ENCODE measurements at regions of chr10 and their contacts with region 1.

Region 1: DNA sequence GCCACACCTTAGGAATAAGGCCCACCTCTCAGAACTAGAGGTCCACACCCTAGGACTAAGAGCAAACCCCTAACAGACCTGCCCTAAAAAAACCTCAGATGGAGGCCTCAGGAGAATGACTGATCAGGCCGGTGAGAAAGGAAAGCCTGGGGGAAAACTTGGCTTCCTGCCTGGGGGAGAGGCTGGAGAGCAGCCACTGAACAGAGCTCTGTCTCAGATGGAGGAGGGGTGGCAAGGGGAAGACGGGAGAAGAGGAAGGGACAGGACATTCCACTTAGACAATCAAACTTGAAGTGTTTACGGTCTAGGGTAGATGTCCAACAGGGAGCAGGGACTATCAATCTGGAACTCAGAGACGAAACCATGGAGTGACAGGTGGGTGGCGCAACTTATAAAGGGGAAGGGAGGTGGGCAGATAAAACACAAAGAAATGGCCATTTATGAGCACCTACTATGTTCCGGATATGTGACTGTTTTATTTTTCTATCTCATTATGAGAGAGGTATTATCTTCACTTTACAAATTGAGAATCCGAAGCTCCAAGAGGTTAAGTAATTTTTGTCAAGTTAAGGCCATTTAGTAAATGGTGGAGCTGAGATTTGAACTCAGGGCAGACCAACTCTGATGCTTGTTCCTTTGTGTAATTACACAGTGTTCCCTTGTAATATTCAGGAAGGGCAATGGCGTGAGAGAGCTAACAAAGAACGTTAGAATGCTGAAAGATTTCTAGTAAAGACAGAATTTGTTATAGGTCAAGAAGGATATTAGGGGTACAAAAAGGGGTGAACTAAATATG is 82.6 kb downstream of the DNMBP start:
- DNase-seq: peak in 1 of 2 experiments; percentile 34
- ATAC-seq: peak in 1 of 2 experiments; percentile 23; a peak in 3 of 6 replicates
- H3K4me3 ChIP-seq: peak overlapping the region; percentile 42
- H3K27ac ChIP-seq: peak overlapping the region; percentile 84
- H3K4me1 ChIP-seq: peaks cover 70% of the 10 kb centered on the region
- CTCF ChIP-seq: no peak
- EP300 ChIP-seq: no peak
- POLR2A ChIP-seq: no peak
- RAD21 ChIP-seq: no peak

Region 2: GRCh38 chr10:99809931-99810615 is 117.0 kb before region 1 on chr10:
- CTCF ChIA-PET with region 1: no interaction called
- POLR2A ChIA-PET with region 1: no interaction called
- DNase-seq: no peak
- ATAC-seq: no peak
- H3K4me3 ChIP-seq: no peak overlapping the region
- H3K27ac ChIP-seq: no peak overlapping the region; a peak in 1 of 6 replicates
- H3K4me1 ChIP-seq: peaks cover 6% of the 10 kb centered on the region; the same call in 1 of the 3 replicates
- CTCF ChIP-seq: no peak
- EP300 ChIP-seq: no peak
- POLR2A ChIP-seq: no peak
- RAD21 ChIP-seq: no peak

Region 3: DNA sequence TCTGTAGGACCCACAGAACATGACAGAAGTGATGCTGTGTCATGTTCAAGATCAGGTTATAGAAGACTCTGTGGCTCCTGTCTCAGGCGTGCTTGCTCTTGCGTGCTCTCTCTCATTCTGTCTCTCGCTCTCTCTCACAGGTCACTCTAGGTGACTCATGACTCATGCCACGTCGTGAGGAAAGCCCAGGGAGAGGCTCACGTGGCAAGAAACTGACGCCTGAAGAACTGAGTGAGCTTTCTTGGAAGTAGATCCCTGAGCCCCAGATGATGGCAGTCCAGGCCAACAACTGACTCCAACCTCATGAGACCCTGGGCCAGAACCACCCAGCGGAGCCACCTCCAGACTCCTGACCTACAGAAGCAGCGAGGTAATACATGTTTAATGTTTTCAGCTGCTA is 20.7 kb before region 1 on chr10:
- CTCF ChIA-PET with region 1: interaction called, 58 read pairs
- POLR2A ChIA-PET with region 1: no interaction called
- DNase-seq: peak; percentile 79 to 88
- ATAC-seq: peak; percentile 89 to 97
- H3K4me3 ChIP-seq: no peak overlapping the region
- H3K27ac ChIP-seq: peak overlapping the region; percentile 46 to 59
- H3K4me1 ChIP-seq: peaks cover 21% of the 10 kb centered on the region
- CTCF ChIP-seq: peak; percentile 50
- EP300 ChIP-seq: no peak
- POLR2A ChIP-seq: no peak
- RAD21 ChIP-seq: peak; percentile 69 to 87

Measured in A549 (cell line).